Gastrocnemius medialis (tissue), 4 donors: ENCODE measurements at regions of chr6 and their contacts with region 1.

Region 1: GRCh38 chr6:18343741-18344140 is 43.4 kb upstream of the RNF144B start:
- DNase-seq: no peak
- ATAC-seq: no peak
- H3K4me3 ChIP-seq: no peak overlapping the region
- H3K27ac ChIP-seq: peak overlapping the region; percentile 82 to 89 (median 89)
- H3K4me1 ChIP-seq: peaks cover 39 to 42% of the 10 kb centered on the region in 2 donors
- H3K27me3 ChIP-seq: no peaks in the 10 kb centered on the region
- CTCF ChIP-seq: no peak
- POLR2A ChIP-seq: no peak

Region 2: GRCh38 chr6:18387061-18387721 is 43.5 kb after region 1 on chr6 and contains the start of gene RNF144B:
- in situ Hi-C with region 1: no loop called
- intact Hi-C with region 1: loop called (anchors 1 kb)
- DNase-seq: peak; percentile 91 to 94
- ATAC-seq: peak; percentile 83 to 85
- H3K4me3 ChIP-seq: peak within 1 kb of the TSS; percentile 60 to 71 (median 63)
- H3K27ac ChIP-seq: peak within 1 kb of the TSS; percentile 87 to 92 (median 90)
- H3K4me1 ChIP-seq: peaks cover 36 to 44% of the 10 kb centered on the region in 2 donors
- H3K27me3 ChIP-seq: no peaks in the 10 kb centered on the region
- CTCF ChIP-seq: peak in 1 of 5 experiments; percentile 15
- POLR2A ChIP-seq: peak; percentile 75 to 91
- total RNA-seq, gene RNF144B: 8.4 to 47.0 (median 31.9) TPM